Esophagus muscularis mucosa (tissue), 4 donors: ENCODE measurements at regions of chr5 and their contacts with region 1.

Region 1: DNA sequence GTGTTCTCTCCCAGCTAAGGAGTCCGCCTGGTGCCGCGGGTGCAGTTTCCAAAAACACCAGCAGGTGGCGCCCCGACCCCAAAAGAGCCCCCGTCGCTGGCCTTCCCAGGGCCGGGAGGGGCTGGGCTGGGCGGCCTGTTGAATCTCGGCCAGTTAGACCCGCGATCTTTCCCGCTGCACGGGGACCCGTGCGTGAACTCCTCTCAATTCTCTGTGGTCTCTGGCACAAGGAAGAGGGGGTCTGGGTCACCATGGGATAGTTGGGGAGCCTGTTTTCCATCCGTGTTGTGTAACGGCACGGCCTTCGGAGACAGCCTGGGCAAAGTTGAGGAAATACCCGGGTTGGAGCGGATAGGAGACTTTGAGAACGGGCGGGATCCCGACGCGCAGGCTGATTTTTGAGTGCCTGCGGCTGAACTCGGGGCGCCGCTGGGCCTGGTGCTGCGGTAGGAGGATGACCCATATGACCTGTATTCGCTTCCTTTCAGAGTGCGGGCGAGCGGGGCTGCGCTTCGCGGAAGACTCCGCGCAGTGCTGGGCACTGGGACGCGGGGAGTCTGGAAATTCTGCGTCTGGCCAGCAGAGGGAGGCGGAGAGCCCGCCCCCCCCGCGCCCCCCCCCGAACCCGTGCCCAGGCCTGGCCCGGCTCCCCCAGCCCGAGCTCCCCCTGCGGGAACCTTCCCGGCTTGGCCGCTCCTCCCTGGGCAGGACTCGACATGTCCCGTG is 7.9 kb upstream of the PSD2 start:
- DNase-seq: peak; percentile 97
- H3K4me3 ChIP-seq: peak overlapping the region; percentile 60 to 72 (median 66)
- H3K27ac ChIP-seq: peak overlapping the region; percentile 67 to 74 (median 72)
- H3K4me1 ChIP-seq: peaks cover 8 to 18% (median 17%) of the 10 kb centered on the region in 4 donors
- H3K27me3 ChIP-seq: peaks cover 0 to 16% (median 0%) of the 10 kb centered on the region in 4 donors
- CTCF ChIP-seq: peak; percentile 83 to 99 (median 92)
- EP300 ChIP-seq: no peak
- POLR2A ChIP-seq: no peak

Region 2: GRCh38 chr5:139765409-139766217 is 22.1 kb before region 1 on chr5:
- intact Hi-C with region 1: no loop called
- DNase-seq: no peak
- H3K4me3 ChIP-seq: peak overlapping the region; percentile 54 to 79 (median 57)
- H3K27ac ChIP-seq: peak overlapping the region in 1 of 4 donors; percentile 48
- H3K4me1 ChIP-seq: peaks cover 13 to 31% (median 22%) of the 10 kb centered on the region in 4 donors
- H3K27me3 ChIP-seq: peaks cover 0 to 30% (median 14%) of the 10 kb centered on the region in 4 donors
- CTCF ChIP-seq: peak; percentile 85 to 98 (median 96)
- EP300 ChIP-seq: no peak
- POLR2A ChIP-seq: no peak

Region 3: GRCh38 chr5:139844472-139845145 is 56.9 kb after region 1 on chr5:
- intact Hi-C with region 1: loop called (anchors 2 kb)
- DNase-seq: no peak
- H3K4me3 ChIP-seq: no peak overlapping the region
- H3K27ac ChIP-seq: no peak overlapping the region
- H3K4me1 ChIP-seq: peaks cover 5 to 25% (median 14%) of the 10 kb centered on the region in 4 donors
- H3K27me3 ChIP-seq: peaks cover 0 to 9% (median 0%) of the 10 kb centered on the region in 4 donors
- CTCF ChIP-seq: peak; percentile 60 to 71 (median 66)
- EP300 ChIP-seq: no peak
- POLR2A ChIP-seq: no peak

Region 4: DNA sequence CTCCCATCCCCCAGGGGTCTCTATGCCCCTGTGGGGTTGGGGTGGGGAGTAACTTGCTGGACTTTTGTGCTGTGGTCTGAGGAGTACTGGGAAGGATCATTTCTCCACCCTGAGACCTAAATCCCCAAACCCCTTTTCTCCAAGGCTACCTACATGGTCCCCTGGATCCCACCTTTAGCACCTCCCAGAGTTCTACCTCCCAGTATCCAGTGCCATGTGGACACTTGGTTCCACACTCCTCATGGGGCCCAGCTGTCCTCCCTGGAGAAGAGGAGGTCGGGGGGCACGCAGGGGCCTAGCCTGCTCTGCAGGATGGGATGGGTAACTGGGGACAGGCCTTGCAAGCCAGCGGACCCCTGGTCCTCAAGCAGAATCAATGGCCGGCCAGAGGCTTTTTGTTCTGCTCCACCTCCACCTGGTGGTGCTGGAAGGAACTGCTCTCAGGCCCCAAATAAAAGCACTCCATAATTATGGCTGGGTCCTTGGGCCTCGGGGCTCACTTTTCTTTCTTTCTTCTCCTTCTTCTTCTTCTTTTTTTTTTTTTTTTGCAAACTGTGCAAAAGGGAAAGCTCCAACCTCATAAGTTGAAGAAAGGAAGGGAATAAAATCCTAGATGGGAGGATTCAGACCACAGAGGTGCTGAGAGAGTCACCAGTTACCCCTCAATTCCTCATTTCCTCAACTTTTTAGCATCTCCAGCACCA is 76.3 kb after region 1 on chr5:
- intact Hi-C with region 1: loop called (anchors 1 kb)
- DNase-seq: no peak
- H3K4me3 ChIP-seq: no peak overlapping the region
- H3K27ac ChIP-seq: peak overlapping the region in 2 of 4 donors; percentile 43 to 48
- H3K4me1 ChIP-seq: peaks cover 8 to 22% (median 15%) of the 10 kb centered on the region in 4 donors
- H3K27me3 ChIP-seq: no peaks in the 10 kb centered on the region
- CTCF ChIP-seq: peak in 2 of 3 experiments; percentile 86 to 95
- EP300 ChIP-seq: no peak
- POLR2A ChIP-seq: no peak

Region 5: DNA sequence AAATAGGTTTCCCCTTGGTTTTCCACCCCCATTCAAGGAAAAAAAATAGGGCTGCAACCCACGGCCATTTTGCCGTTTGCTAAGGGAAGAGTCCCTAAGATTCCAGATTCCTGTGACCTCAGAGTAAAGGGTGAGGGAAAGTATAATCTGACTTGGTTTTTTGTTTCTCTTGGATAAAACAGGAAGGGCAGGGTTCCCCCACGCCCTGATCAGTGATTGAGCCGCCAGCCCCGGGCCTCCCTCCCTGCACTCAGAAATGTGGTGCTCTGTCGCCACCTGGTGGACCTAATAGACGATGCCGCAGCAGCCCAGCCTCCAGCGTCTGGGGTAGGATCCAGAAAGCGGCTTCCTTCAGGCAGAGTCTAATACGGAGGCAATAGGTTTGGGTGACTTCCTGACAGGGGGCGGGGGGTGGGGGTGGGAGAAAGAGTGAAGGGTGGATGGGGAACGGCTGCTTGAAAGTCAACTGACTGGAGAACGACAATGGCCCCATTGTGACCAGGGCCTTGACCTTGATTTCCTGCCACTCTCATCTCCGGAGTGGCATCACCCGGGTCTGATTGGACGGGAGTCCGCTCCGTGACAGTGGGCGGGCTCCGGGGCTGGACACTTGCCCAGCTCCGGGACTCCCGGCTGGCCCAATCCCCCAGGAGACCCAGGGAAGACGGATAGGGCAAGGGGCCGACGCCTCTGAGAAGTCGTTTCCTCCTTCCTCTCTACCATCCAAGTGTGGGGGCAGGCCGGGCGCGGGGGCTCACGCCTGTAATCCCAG is 369.5 kb after region 1 on chr5:
- intact Hi-C with region 1: loop called (anchors 10 kb)
- DNase-seq: peak; percentile 97
- H3K4me3 ChIP-seq: peak overlapping the region; percentile 46 to 60 (median 49)
- H3K27ac ChIP-seq: peak overlapping the region; percentile 10 to 67 (median 50)
- H3K4me1 ChIP-seq: peaks cover 11 to 31% (median 20%) of the 10 kb centered on the region in 4 donors
- H3K27me3 ChIP-seq: no peaks in the 10 kb centered on the region
- CTCF ChIP-seq: peak; percentile 93 to 98 (median 94)
- EP300 ChIP-seq: no peak
- POLR2A ChIP-seq: no peak